Activated CD4-positive, alpha-beta T cell treated with anti-CD3 and anti-CD28 coated beads for 36 hours (primary cell): ENCODE measurements at regions of chr13 and their contacts with region 1.

Region 1: DNA sequence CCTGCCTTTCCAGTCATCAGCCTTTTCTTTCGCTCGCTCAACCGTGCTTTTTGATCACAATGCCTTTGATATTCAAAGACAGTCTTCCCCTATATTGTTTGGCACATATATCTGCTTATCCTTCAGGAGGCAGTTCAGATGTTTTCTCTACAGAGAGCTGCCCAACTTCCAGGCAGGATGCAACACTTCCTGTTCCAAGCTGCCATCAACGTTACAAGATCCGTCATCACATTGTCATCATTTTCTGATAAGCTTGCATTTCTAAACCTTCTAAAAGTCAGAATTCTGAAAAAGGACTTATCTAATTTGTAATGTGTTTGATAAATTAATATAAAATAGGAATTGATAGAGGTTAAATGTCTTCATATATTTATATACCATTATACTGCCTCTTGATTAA is 574.2 kb downstream of the TBC1D4 start:
- DNase-seq: no peak
- ATAC-seq: no peak
- H3K4me3 Mint-ChIP-seq: no peak overlapping the region
- H3K27ac Mint-ChIP-seq: no peak overlapping the region
- H3K4me1 Mint-ChIP-seq: no peaks in the 10 kb centered on the region
- H3K27me3 Mint-ChIP-seq: peaks cover 6% of the 10 kb centered on the region

Region 2: GRCh38 chr13:73074036-73074435 is 1833.8 kb before region 1 on chr13:
- CTCF ChIA-PET with region 1: no interaction called
- POLR2A ChIA-PET with region 1: interaction called, 15 read pairs
- intact Hi-C with region 1: no loop called
- DNase-seq: no peak
- ATAC-seq: no peak
- H3K4me3 Mint-ChIP-seq: no peak overlapping the region
- H3K27ac Mint-ChIP-seq: no peak overlapping the region
- H3K4me1 Mint-ChIP-seq: peaks cover 5% of the 10 kb centered on the region
- H3K27me3 Mint-ChIP-seq: no peaks in the 10 kb centered on the region

Region 3: GRCh38 chr13:75091718-75092117 is 183.9 kb after region 1 on chr13:
- CTCF ChIA-PET with region 1: no interaction called
- POLR2A ChIA-PET with region 1: no interaction called
- intact Hi-C with region 1: no loop called
- DNase-seq: no peak
- ATAC-seq: no peak
- H3K4me3 Mint-ChIP-seq: no peak overlapping the region
- H3K27ac Mint-ChIP-seq: no peak overlapping the region
- H3K4me1 Mint-ChIP-seq: no peaks in the 10 kb centered on the region
- H3K27me3 Mint-ChIP-seq: peaks cover 8% of the 10 kb centered on the region